Activated naive CD4-positive, alpha-beta T cell treated with anti-CD3 and anti-CD28 coated beads for 36 hours (primary cell): ENCODE measurements at regions of chr2 and their contacts with region 1.

Region 1: GRCh38 chr2:176174824-176175708 is 13.4 kb upstream of the HOXD1 start:
- DNase-seq: no peak
- H3K4me3 Mint-ChIP-seq: no peak overlapping the region
- H3K27ac Mint-ChIP-seq: no peak overlapping the region
- H3K4me1 Mint-ChIP-seq: peaks cover 24% of the 10 kb centered on the region
- H3K27me3 Mint-ChIP-seq: peaks cover 78% of the 10 kb centered on the region

Region 2: DNA sequence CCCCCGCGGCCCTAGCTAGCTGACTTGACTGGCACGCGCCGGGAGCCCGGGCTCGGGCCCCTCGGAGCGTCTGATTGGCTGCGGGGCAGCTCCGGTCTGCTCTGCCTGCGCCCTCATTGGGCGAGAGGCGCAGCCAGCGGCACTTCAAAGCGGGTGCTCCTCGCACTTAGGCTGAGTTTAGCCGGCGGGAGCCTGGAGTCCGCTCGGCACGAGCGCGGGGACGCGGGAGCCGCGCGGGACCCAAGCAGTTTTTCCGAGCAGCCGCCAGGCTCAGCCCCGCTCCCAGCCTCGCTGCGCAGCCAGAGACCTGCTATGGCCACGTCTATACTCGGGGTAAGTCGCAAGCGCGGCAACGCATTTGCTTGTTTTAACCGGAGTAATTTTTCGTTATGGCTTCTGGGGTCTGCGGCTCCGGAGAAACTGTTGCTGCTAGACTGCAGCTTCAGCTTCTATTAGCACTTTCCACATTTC is 1840.2 kb before region 1 on chr2 and contains the start of gene SP9:
- CTCF ChIA-PET with region 1: no interaction called
- intact Hi-C with region 1: loop called (anchors 5 kb)
- DNase-seq: peak; percentile 37
- H3K4me3 Mint-ChIP-seq: peak within 1 kb of the TSS; percentile 43
- H3K27ac Mint-ChIP-seq: peak within 1 kb of the TSS; percentile 46
- H3K4me1 Mint-ChIP-seq: peaks cover 36% of the 10 kb centered on the region
- H3K27me3 Mint-ChIP-seq: peaks cover 70% of the 10 kb centered on the region
- total RNA-seq, gene SP9: not detected

Region 3: DNA sequence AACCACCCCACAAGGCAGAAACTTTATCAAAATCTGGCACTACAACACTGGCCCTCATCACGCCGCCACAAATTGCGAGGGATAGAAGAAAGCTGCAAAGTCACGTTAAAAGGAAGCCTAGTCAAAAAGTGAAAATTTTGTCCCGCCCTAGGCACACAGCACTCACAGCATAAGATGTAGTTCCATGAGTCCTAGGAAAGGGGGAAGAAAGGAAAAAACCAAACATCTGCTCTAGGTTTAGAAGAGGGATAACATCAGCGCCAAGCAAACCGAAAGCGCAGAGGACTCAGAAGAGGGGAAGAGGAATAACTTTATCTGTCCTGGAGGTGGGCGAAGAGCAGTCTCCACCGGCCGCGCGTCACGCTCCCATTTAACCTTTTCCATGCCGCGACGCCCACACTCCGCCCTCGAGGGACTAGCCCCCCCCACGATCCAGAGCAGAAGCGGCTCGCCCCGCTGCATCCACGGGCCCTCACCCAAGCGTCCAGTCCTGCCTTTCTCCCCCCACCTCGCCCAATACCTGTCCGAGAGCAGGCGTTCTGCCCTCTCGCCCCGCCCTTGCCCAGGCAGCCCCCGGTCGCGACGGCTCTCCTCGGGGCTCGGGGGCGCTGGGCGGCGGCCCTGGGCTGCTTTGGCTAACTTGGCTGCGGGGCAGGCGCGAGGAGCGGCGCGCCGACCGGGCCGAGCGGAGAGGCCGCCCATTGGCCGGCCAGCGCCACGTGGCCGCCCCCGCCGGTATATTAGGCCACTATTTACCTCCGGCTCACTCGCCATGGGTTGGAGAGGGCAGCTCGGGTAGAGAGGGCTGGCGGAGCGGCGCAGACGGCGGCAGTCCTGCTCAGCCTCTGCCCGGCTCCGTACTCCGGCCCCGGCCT is 13.1 kb after region 1 on chr2 and contains the start of gene HOXD1:
- CTCF ChIA-PET with region 1: no interaction called
- intact Hi-C with region 1: loop called (anchors 2 kb)
- DNase-seq: no peak
- H3K4me3 Mint-ChIP-seq: peak within 1 kb of the TSS; percentile 68
- H3K27ac Mint-ChIP-seq: no peak within 1 kb of the TSS
- H3K4me1 Mint-ChIP-seq: peaks cover 17% of the 10 kb centered on the region
- H3K27me3 Mint-ChIP-seq: peaks cover 74% of the 10 kb centered on the region
- total RNA-seq, gene HOXD1: not detected